ENCODE measurements at regions of chr12 and their contacts with region 1.

Region 1: GRCh38 chr12:53321074-53321814 is at the start of gene AAAS:
- H3K4me3 ChIP-seq: peak within 1 kb of the TSS; percentile 97
- H3K27ac ChIP-seq: peak within 1 kb of the TSS; percentile 82
- H3K4me1 ChIP-seq: no peaks in the 10 kb centered on the region
- CTCF ChIP-seq: peak; percentile 96

Region 2: GRCh38 chr12:52713960-52714886 is 607.0 kb before region 1 on chr12:
- CTCF ChIA-PET with region 1: no interaction called
- POLR2A ChIA-PET with region 1: no interaction called
- H3K4me3 ChIP-seq: no peak overlapping the region
- H3K27ac ChIP-seq: no peak overlapping the region
- H3K4me1 ChIP-seq: no peaks in the 10 kb centered on the region
- CTCF ChIP-seq: no peak

Region 3: DNA sequence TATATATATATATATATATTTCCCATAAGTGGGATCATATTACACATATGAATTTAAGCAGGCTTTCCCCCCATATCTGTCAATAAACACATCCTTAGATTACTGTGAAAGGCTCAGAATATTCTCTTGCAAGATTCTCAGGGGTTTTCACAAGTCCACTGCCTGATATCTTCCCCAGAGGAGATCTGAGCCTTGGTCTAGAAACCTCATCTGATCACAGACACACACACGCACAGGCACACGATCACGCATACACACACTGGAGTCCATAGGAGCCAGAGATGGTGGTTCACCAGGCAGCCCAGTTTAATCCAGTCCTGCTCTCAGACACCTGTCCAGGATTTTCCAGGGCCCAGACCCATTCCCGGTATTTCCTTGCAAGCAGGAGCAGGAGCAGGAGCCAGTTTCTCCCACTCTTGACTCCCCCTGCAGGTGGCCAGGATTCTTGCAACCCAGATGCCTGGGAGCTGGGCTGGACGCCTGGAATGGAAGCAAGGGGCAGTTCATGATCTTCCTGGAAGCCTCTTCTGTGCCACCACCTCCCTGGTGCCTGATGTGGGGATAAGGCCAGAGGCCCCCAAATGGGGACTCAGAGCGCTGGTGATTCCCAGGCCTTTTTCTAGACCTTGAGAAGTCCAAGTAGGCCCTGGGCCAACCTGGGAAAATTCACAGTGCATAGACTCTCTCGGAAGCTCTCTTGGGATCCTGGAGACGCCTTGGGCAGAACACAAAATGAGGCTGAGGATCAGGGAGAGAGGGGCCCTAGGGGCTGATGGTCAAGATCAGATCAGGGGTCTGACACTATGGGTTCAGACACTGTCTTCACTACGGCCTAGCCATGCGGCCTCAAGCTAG is 455.9 kb before region 1 on chr12:
- CTCF ChIA-PET with region 1: no interaction called
- POLR2A ChIA-PET with region 1: no interaction called
- H3K4me3 ChIP-seq: no peak overlapping the region
- H3K27ac ChIP-seq: no peak overlapping the region
- H3K4me1 ChIP-seq: no peaks in the 10 kb centered on the region; the same call in 1 of the 2 replicates
- CTCF ChIP-seq: peak; percentile 68; the same call in 1 of the 2 replicates

Region 4: DNA sequence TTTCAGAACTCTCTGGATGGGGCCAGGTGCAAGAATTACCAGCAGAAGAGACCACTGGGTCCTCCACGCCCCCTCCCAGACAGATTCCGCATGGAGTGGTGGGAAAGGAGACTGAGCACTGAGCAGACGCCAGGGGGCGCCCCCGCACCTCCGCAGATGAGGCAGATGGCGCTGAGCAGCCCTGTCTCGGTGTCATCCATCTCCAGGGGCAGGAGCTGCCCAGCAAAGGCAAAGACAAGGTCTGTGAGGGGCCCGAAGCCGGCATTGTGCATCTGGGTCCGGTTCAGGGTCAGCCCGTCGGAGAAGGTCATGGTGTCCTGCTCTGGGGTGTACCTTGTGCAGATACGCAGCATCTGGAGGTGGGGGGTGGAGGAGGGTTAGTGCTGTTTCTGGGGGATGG is 107.9 kb before region 1 on chr12:
- CTCF ChIA-PET with region 1: interaction called, 67 read pairs
- POLR2A ChIA-PET with region 1: interaction called, 11 read pairs
- H3K4me3 ChIP-seq: no peak overlapping the region
- H3K27ac ChIP-seq: no peak overlapping the region
- H3K4me1 ChIP-seq: no peaks in the 10 kb centered on the region
- CTCF ChIP-seq: peak; percentile 91

Region 5: GRCh38 chr12:53295070-53295890 is 26.0 kb before region 1 on chr12 and contains the start of gene PFDN5:
- CTCF ChIA-PET with region 1: interaction called, 31 read pairs
- POLR2A ChIA-PET with region 1: interaction called, 30 read pairs
- H3K4me3 ChIP-seq: peak within 1 kb of the TSS; percentile 73
- H3K27ac ChIP-seq: peak within 1 kb of the TSS; percentile 61
- H3K4me1 ChIP-seq: peaks cover 4% of the 10 kb centered on the region
- CTCF ChIP-seq: no peak

Region 6: DNA sequence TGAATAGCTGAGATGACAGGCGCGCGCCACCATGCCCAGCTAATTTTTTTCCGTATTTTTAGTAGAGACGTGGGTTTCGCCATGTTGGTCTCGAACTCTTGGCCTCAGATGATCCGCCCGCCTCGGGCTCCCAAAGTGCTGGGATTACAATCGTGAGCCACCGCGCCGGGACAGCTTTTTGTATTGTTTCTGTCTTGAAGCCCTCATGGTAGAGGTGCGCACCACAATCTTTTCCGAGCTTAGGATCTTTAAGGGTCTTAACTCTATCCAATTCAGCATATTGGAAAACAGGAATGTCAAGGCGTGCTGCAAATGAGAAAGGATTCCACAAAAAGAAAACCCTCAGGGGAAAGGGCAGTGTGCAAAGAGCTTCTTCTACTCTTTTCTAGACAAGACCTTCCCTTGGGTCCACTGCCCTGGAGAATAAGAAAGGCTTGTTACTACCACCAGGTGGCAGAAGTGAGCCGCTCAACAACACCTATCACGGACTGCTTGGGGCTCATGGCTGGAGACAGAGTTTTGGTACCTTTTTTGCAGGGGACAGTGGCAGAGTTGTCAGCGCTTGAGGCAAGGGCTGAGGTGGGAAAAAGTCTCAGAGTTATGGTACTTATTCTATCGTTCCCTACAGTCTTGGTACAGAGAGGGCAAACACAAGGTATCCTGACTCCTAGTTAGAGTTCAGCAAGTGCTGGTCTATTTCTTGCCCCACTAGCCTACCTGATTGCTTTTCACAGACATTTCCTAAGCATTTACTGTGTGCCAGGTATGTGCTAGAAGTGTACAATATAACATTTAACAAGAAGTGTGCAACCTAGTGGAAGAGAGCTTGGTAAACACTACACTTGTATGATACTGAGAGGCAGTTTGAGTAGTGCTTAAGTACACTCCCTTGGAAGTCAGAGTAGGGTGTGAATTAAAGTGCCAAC is 31.4 kb after region 1 on chr12:
- CTCF ChIA-PET with region 1: interaction called, 36 read pairs
- POLR2A ChIA-PET with region 1: interaction called, 4 read pairs
- H3K4me3 ChIP-seq: no peak overlapping the region
- H3K27ac ChIP-seq: no peak overlapping the region
- H3K4me1 ChIP-seq: no peaks in the 10 kb centered on the region
- CTCF ChIP-seq: peak; percentile 71; the same call in 1 of the 2 replicates

Region 7: DNA sequence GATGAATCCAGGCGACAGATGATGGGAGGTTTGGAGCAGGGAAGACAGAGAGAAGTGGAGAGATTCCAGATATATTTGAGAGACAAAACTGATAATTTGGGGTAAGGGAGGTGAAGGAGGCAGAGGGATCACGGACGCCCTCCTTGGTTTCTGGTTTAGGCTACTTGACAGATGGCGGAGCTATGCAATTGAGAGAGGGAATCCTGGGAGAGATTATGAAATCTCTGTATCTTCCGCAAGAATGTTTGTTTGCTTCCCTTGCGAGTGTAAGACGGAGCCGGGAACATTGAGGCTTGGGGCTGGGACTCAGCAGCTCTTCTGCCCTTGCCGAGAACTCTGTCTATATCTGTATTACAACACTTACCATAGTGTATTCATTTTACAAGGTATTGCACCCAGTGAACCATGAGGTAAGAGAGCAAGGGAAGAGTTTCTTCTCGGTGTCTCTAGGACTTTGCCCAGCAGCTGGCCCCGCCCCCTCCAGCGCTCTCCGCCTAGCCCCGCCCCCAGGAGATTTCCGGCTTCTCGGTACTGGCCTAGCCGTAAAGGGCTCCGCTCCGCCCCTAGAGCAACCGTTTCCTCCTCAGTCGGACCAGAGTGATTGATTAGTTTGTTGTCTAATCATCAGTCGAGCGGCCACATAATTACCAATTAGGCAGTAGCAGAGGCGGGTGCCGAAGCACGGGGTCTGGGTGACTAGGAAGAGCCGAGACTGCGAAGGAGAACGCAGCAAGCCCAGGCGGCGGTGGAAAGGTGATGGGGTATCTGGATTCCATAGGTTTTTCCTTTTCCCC is 120.0 kb after region 1 on chr12 and contains the start of gene PRR13:
- CTCF ChIA-PET with region 1: interaction called, 3 read pairs
- POLR2A ChIA-PET with region 1: interaction called, 13 read pairs
- H3K4me3 ChIP-seq: peak within 1 kb of the TSS; percentile 61
- H3K27ac ChIP-seq: peak within 1 kb of the TSS; percentile 79
- H3K4me1 ChIP-seq: 0 out of 2 replicates have a peak, but pooled peaks cover 2% of the 10 kb centered on the region
- CTCF ChIP-seq: no peak

Region 8: DNA sequence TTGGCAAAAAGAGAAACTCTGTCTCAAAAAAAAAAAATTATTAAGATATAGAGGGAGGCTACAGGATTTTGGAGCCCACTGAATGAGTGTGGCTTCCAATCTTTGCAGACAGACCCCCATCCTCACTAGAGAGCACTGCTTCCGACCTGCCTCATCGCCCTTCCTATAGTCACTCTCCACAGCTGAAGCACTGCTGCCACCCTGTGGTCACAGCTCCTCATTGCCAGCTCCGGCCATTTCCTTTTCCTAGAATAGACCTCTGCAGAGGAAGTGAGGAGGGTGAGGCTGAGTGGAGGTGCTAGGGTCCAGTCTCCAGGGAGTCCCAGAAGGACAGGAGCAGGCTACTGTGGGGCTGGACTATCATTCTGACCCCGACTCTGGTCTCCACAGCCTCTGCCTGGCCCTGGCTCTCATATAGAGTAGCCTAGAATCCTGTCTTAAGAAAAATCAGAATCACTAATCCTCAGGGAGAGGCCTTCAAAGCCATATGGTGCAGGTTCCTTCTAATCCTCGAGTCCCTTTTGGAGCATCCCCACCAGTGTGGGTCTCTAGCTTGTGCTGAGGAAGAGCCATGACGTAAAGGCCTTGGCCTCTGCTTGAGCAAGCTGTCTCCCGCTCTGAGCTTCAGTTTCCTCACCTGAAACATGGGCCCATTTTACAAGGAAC is 187.4 kb after region 1 on chr12:
- CTCF ChIA-PET with region 1: interaction called, 61 read pairs
- POLR2A ChIA-PET with region 1: interaction called, 8 read pairs
- H3K4me3 ChIP-seq: no peak overlapping the region
- H3K27ac ChIP-seq: no peak overlapping the region
- H3K4me1 ChIP-seq: no peaks in the 10 kb centered on the region
- CTCF ChIP-seq: peak; percentile 91

Region 9: GRCh38 chr12:53530920-53531319 is 209.7 kb after region 1 on chr12:
- CTCF ChIA-PET with region 1: no interaction called
- POLR2A ChIA-PET with region 1: no interaction called
- H3K4me3 ChIP-seq: no peak overlapping the region
- H3K27ac ChIP-seq: no peak overlapping the region
- H3K4me1 ChIP-seq: no peaks in the 10 kb centered on the region
- CTCF ChIP-seq: no peak